Sciatic nerve (tissue), 2 donors: ENCODE measurements at regions of chr17 and their contacts with region 1.

Region 1: DNA sequence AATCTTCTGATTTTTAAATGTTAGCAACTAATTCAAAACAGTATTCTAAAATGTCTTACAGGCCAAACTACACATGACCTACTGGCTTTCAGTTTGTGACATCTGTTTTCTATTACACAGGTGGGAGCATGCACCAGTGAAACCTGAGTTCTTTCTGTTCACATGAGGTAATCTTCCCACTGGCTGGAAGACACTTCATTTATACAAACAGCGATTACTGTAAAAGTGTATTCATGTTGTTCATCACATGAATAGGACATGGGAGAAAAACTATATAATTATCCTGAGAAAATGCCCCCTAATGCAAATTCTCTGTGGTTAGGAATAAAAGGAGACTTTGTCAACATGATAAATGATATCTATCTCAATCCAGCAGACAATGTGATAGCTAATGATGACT is 11.1 kb upstream of the PIK3R5 start:
- DNase-seq: no peak
- ATAC-seq: no peak

Region 2: GRCh38 chr17:8916466-8916865 is 60.2 kb before region 1 on chr17:
- intact Hi-C with region 1: loop called (anchors 10 kb)
- DNase-seq: no peak
- ATAC-seq: peak; percentile 66

Region 3: GRCh38 chr17:9004132-9004960 is 27.7 kb after region 1 on chr17:
- intact Hi-C with region 1: no loop called
- DNase-seq: no peak
- ATAC-seq: no peak

Region 4: DNA sequence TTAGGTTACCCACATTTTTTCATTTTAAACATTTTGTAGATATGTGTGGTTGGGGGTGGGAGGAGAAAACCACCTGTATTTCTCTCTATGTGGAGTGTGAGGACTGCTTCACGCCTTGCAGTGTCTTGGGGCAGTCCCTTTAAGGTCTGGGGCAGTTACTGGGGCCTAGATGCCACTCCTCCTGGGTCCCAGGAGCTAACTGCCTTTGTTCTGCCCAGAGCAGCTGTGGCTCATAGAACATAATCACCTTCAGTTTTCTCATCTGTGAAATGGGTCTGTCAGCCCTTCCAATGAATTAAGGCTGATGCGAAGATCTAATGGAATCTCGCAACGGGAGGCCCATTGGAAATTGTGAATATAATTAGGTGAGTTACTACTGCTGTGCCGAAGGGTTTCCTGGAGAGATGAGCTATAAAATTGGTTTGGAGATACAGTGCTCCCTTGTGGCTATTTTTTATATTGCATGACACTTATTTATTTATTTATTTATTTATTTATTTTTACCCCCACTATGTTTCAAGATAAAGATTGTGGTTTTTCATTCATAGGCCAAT is 791.8 kb after region 1 on chr17:
- intact Hi-C with region 1: loop called (anchors 5 kb)
- DNase-seq: no peak
- ATAC-seq: no peak